Activated CD4-positive, alpha-beta T cell treated with anti-CD3 and anti-CD28 coated beads for 36 hours (primary cell): ENCODE measurements at regions of chr20 and their contacts with region 1.

Region 1: GRCh38 chr20:33992923-33993575 is 662 bp upstream of the RALY start:
- DNase-seq: peak; percentile 100
- ATAC-seq: peak; percentile 87
- H3K4me3 Mint-ChIP-seq: peak overlapping the region; percentile 97
- H3K27ac Mint-ChIP-seq: peak overlapping the region; percentile 97
- H3K4me1 Mint-ChIP-seq: peaks cover 50% of the 10 kb centered on the region
- H3K27me3 Mint-ChIP-seq: no peaks in the 10 kb centered on the region

Region 2: DNA sequence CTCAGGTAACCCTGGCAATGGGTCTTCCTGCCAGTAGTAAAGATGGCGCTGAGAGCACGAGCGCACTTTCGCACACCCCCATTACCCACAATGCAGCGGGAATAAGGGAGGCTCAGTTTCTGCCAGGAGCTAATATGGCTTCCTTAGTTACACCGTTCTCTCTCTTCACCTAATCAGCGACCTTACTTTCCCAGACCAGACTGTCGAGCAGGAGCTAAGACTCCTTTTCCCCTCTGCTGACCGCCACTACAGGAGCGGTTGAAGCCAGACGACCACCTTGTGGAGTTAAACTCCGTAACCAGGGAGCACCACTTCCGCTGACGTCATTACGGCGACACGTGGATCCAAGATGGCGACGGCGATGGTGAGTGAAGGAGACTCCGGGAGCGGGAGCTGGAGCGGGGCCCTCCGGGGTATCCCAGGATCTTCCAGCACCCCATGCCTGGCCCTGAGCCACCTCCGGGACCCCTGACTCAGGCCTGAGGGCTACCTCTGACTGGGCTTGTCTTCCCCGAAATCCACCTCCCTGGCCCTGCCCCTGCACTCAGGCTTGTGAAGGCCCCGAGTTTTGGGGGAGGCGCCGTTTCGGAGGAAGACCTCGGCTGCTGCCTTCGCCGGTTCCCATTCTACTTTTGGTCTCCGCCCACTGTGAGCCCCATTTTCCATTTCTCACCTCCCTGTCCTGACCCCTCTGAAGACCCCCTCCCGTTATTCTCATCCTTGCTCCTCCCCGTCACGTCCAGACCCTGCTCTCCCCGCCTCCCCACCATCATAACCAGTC is 1883.5 kb before region 1 on chr20 and contains the start of gene TM9SF4:
- CTCF ChIA-PET with region 1: no interaction called
- POLR2A ChIA-PET with region 1: no interaction called
- intact Hi-C with region 1: loop called in 1 of 2 experiments (anchors 10 kb)
- DNase-seq: peak; percentile 93
- ATAC-seq: peak; percentile 88
- H3K4me3 Mint-ChIP-seq: peak within 1 kb of the TSS; percentile 97
- H3K27ac Mint-ChIP-seq: peak within 1 kb of the TSS; percentile 99
- H3K4me1 Mint-ChIP-seq: peaks cover 34% of the 10 kb centered on the region
- H3K27me3 Mint-ChIP-seq: no peaks in the 10 kb centered on the region
- total RNA-seq, gene TM9SF4: 43.2 to 66.5 TPM

Region 3: GRCh38 chr20:33291830-33292355 is 701.2 kb before region 1 on chr20:
- CTCF ChIA-PET with region 1: no interaction called
- POLR2A ChIA-PET with region 1: no interaction called
- intact Hi-C with region 1: no loop called
- DNase-seq: peak; percentile 79
- ATAC-seq: peak; percentile 63
- H3K4me3 Mint-ChIP-seq: no peak overlapping the region
- H3K27ac Mint-ChIP-seq: no peak overlapping the region
- H3K4me1 Mint-ChIP-seq: no peaks in the 10 kb centered on the region
- H3K27me3 Mint-ChIP-seq: no peaks in the 10 kb centered on the region

Region 4: GRCh38 chr20:33489495-33490022 is 503.5 kb before region 1 on chr20:
- CTCF ChIA-PET with region 1: no interaction called
- POLR2A ChIA-PET with region 1: interaction called, 6 read pairs
- intact Hi-C with region 1: loop called in 1 of 2 experiments (anchors 1 kb)
- DNase-seq: peak; percentile 99
- ATAC-seq: peak; percentile 98
- H3K4me3 Mint-ChIP-seq: peak overlapping the region; percentile 85
- H3K27ac Mint-ChIP-seq: peak overlapping the region; percentile 78
- H3K4me1 Mint-ChIP-seq: peaks cover 6% of the 10 kb centered on the region
- H3K27me3 Mint-ChIP-seq: no peaks in the 10 kb centered on the region

Region 5: DNA sequence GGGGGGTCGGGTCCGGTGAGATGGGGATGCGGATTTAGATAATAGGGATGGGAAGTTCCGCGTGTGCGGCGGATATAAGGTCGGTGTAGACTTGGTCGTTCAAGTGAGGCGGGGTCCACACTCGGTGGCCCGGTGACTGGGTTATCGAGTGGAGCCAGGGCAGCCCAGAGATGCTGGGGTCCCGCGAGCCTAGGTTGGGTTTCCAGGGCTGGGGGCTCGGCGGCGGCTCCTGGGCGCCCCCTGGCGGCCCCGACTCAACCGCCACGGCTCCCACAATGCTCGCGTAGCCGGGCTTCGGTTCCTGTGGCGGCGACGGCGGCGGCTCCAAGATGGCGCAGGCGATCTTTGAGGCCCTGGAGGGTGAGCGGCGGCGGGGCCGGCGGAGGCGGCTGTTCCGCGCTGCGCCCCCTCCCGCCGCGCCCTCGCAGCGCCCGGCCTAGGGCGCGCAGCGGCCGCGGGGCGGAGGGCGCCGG is 261.3 kb before region 1 on chr20 and contains the start of gene ZNF341:
- CTCF ChIA-PET with region 1: interaction called, 5 read pairs
- POLR2A ChIA-PET with region 1: no interaction called
- intact Hi-C with region 1: loop called in 1 of 2 experiments (anchors 1 kb)
- DNase-seq: peak; percentile 94
- ATAC-seq: peak; percentile 90
- H3K4me3 Mint-ChIP-seq: peak within 1 kb of the TSS; percentile 75
- H3K27ac Mint-ChIP-seq: peak within 1 kb of the TSS; percentile 86
- H3K4me1 Mint-ChIP-seq: peaks cover 21% of the 10 kb centered on the region
- H3K27me3 Mint-ChIP-seq: no peaks in the 10 kb centered on the region
- total RNA-seq, gene ZNF341: 4.3 to 6.1 TPM

Region 6: GRCh38 chr20:34363062-34363464 is 370.0 kb after region 1 on chr20 and contains the start of gene ITCH:
- CTCF ChIA-PET with region 1: no interaction called
- POLR2A ChIA-PET with region 1: interaction called, 3 read pairs
- intact Hi-C with region 1: loop called in 1 of 2 experiments (anchors 1 kb)
- DNase-seq: peak; percentile 97
- ATAC-seq: peak; percentile 99
- H3K4me3 Mint-ChIP-seq: peak within 1 kb of the TSS; percentile 91
- H3K27ac Mint-ChIP-seq: peak within 1 kb of the TSS; percentile 98
- H3K4me1 Mint-ChIP-seq: peaks cover 38% of the 10 kb centered on the region
- H3K27me3 Mint-ChIP-seq: no peaks in the 10 kb centered on the region
- total RNA-seq, gene ITCH: 41.4 to 43.5 TPM

Region 7: DNA sequence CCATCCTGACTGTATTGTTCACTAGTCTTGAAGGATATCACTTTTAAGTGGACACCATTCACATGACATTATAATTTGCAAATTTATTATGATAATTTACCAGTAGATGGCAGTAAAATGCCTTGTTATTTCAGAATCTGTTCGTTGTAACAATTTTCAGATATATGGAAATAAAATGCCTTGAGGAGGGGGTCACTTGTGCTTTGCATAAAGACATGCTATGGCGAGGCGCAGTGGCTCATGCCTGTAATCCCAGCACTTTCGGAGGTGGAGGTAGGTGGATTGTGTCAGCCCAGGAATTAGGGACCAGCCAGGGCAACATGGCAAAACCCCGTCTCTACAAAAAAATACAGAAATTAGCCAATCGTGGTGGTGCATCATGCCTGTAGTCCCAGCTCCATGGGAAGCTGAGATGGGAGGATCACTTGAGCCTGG is 841.4 kb after region 1 on chr20:
- CTCF ChIA-PET with region 1: no interaction called
- POLR2A ChIA-PET with region 1: no interaction called
- intact Hi-C with region 1: no loop called
- DNase-seq: no peak
- ATAC-seq: peak; percentile 42
- H3K4me3 Mint-ChIP-seq: no peak overlapping the region
- H3K27ac Mint-ChIP-seq: no peak overlapping the region
- H3K4me1 Mint-ChIP-seq: no peaks in the 10 kb centered on the region
- H3K27me3 Mint-ChIP-seq: peaks cover 8% of the 10 kb centered on the region

Region 8: DNA sequence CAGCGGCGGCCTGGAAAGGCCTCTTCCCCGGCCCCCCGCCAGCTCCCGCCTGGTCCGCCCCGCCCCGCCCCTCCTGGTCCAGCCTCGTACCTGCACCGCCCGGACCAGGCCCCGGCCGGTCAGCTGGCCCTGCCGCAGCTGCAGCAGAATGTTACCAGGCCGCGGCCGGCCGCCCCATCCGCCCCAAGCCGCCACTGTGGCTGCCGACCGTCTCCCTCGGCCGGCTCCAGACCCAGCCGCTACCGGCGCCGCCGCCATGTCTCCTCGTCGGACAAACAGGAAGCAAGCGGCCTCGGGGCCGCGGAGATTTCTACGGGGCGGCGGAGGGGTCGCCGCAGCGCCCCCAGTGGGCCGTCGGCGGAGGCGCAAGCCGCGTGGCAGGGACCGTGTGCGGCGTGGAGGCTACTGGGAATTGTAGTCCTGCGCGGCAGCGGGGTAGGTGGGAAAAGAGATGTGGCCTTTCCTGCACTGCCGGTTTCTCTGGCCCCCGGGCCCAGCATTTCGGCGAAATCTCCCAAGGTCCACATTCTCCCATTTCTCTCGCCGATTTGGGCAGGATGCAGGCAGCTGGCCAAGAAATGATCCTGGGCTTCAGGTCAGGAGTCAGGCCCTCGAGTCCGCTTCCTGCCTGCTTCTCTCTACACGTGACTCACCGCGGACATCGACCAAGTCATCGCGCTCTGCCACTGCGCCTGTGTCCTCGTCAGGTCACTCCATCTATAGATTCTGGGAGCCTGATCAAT is 1099.6 kb after region 1 on chr20 and contains the start of gene TRPC4AP:
- CTCF ChIA-PET with region 1: interaction called, 3 read pairs
- POLR2A ChIA-PET with region 1: no interaction called
- intact Hi-C with region 1: loop called in 1 of 2 experiments (anchors 5 kb)
- DNase-seq: peak; percentile 95
- ATAC-seq: peak; percentile 88
- H3K4me3 Mint-ChIP-seq: peak within 1 kb of the TSS; percentile 90
- H3K27ac Mint-ChIP-seq: peak within 1 kb of the TSS; percentile 100
- H3K4me1 Mint-ChIP-seq: peaks cover 52% of the 10 kb centered on the region
- H3K27me3 Mint-ChIP-seq: no peaks in the 10 kb centered on the region
- total RNA-seq, gene TRPC4AP: 36.0 to 39.6 TPM